Panc1 (cell line): ENCODE measurements at regions of chr2 and their contacts with region 1.

Region 1: DNA sequence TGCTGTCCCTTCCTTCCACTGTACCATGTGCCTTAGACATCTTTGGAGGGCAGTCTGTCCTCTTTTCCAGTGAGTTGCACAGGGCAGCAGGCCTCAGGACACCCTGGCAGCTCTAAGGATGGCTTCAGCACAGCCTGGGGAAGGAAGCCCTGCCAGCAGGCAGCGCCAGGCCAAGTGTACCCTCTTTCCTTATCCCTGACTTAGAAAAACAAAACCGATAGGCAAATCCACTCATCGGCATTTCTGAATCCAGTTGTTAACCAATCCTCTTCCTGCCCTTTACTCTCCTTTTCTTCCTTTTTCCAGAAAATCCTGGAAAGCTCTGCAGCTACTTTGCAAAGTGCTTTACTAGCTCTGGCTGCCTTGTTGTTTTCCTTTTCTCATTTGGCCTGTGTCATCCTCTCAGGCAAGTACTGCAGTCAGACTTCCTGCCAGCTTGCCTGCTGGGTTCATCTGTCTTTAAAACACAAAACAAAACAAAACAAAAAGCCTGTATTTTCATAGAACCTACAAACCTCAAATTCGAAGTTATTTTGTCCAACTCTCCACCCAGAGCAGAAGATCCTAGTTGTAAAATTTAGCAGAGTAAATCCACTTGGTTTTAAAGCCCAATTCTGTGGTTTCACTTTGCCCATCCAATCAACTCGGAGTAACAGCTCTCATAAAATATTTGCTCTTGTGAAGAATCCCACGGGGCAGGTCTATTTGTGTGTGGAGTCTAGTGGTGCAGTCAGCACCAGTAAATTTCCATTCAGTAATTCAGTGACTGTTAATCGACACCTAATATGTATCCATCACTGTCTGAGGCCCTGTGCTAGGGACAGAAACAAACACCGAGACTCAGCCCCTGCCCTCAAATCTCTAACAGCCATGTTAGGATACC is 45.2 kb downstream of the PCBP1 start:
- DNase-seq: no peak
- ATAC-seq: peak; percentile 81
- H3K4me3 ChIP-seq: peak overlapping the region; percentile 35 to 56
- H3K27ac ChIP-seq: peak overlapping the region; percentile 96
- H3K4me1 ChIP-seq: peaks cover 45% of the 10 kb centered on the region
- H3K27me3 ChIP-seq: no peaks in the 10 kb centered on the region
- CTCF ChIP-seq: no peak

Region 2: DNA sequence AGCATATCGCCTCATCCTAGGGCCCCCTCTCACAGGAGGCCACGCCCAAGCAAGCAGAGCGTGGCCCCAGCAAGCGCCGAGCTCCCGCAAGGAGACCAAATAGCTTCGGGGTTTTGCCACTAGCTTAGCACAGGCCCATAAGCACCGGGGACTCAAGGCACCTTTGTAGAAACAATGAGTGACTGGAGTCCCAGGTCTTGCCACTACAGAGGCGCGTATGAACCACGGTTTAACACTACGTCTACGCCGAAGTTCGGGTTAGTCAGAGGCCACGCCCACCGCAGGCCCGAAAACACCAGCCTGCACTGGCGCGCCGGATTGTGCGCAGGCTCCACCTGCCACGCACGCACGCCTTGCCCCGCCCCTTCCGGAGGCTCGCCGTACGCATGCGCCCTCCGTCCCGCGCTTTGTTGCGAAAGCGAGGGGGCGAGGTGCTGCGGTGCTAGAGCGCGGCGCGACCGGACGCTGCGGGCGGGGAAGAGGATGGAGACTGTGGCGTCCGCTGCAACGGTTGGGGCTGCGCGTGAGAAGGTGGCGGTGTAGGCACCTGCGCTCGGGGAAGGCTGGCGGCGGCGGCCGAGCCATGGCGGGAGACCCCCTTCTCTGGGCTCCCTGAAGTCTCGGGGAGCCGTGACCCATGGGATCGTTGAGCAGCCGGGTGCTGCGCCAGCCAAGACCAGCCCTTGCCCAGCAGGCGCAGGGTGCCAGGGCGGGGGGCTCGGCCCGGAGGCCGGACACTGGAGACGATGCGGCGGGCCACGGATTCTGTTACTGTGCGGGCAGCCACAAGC is 303.0 kb before region 1 on chr2 and contains the start of gene GMCL1:
- CTCF ChIA-PET with region 1: no interaction called
- POLR2A ChIA-PET with region 1: interaction called, 11 read pairs
- in situ Hi-C with region 1: no loop called
- intact Hi-C with region 1: no loop called
- DNase-seq: peak; percentile 86
- ATAC-seq: peak; percentile 98
- H3K4me3 ChIP-seq: peak within 1 kb of the TSS; percentile 84 to 95
- H3K27ac ChIP-seq: peak within 1 kb of the TSS; percentile 95
- H3K4me1 ChIP-seq: peaks cover 9% of the 10 kb centered on the region
- H3K27me3 ChIP-seq: no peaks in the 10 kb centered on the region
- CTCF ChIP-seq: no peak
- total RNA-seq, gene GMCL1: 13.2 TPM